MCF 10A (cell line): ENCODE measurements at regions of chr2 and their contacts with region 1.

Region 1: DNA sequence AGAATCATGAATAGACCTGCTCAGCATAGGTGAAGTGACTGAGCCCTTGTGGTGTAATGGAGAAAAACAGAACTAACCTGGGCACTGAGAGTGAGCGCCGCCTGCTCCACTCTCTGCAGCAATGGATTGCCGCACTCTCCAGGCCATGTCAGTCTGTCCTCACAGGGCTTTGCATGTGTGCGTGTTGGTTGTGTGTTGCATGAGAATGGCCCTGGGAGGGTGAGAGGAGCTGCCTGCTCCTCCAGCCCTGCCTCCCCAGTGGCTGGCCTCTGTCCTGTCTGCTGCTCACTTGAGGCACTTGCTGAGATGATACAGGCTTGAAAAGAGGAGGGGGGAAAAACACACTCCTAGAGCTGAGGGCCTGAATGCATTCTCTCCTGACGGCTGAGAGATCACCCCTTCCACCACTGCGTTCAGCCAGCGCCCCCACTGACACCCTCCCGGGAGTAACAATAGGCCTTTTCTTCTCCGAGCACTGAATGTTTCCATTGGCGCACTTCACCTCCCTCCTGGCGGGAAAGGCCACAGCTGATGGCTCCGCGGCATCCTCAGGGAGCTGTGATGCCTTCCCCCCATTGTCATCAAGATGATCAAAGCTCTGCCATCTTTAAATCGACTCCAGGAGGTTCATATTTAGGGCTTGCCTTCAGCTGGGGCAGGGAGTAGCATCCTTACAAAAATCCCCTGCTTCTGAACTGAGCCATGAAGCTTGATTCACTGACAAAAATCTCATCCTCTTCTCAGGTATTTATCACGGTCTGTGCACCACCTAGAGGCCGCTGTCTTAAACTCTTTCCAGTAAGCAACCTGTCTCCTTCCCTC is 49.9 kb upstream of the DAPL1 start:
- DNase-seq: peak; percentile 62
- H3K4me3 Mint-ChIP-seq: no peak overlapping the region
- H3K27ac Mint-ChIP-seq: no peak overlapping the region
- H3K4me1 Mint-ChIP-seq: peaks cover 6% of the 10 kb centered on the region
- H3K27me3 Mint-ChIP-seq: peaks cover 38% of the 10 kb centered on the region
- CTCF ChIP-seq: peak; percentile 61

Region 2: DNA sequence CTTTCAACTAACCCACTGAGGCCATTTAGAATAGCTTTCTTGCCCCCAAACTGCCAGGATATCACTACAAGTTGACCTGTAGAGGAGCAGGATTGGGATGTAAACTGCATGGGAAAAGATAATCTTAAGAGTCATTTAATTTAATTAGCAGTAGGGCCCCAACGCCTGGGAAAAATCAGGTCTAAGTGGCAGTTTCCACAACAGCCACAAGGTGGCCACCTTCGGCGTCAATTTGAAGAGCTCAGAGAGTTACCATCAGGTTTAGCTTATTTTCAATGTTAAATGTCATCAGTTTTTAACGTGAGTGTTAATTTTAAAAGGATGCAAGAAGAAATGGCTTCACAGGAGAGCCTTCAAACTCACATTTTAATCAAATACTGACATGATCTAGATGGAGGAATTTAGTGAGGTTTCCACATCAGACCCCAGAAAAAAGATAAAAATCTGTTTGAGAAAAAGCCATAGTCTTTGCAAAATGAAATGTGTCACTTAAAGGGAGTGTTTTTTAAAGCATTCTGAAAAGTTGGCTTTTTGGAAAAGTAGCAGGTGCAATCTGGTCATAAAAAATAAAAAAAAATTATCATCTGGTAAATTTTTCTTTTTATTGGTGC is 720.9 kb before region 1 on chr2:
- CTCF ChIA-PET with region 1: interaction called, 343 read pairs
- POLR2A ChIA-PET with region 1: interaction called, 5 read pairs
- intact Hi-C with region 1: loop called (anchors 2 kb)
- DNase-seq: peak; percentile 64
- H3K4me3 Mint-ChIP-seq: no peak overlapping the region
- H3K27ac Mint-ChIP-seq: no peak overlapping the region
- H3K4me1 Mint-ChIP-seq: no peaks in the 10 kb centered on the region
- H3K27me3 Mint-ChIP-seq: no peaks in the 10 kb centered on the region
- CTCF ChIP-seq: peak; percentile 73

Region 3: GRCh38 chr2:158045362-158045761 is 699.9 kb before region 1 on chr2:
- CTCF ChIA-PET with region 1: interaction called, 16 read pairs
- POLR2A ChIA-PET with region 1: no interaction called
- intact Hi-C with region 1: no loop called
- DNase-seq: peak; percentile 15
- H3K4me3 Mint-ChIP-seq: no peak overlapping the region
- H3K27ac Mint-ChIP-seq: no peak overlapping the region
- H3K4me1 Mint-ChIP-seq: no peaks in the 10 kb centered on the region
- H3K27me3 Mint-ChIP-seq: no peaks in the 10 kb centered on the region
- CTCF ChIP-seq: no peak

Region 4: DNA sequence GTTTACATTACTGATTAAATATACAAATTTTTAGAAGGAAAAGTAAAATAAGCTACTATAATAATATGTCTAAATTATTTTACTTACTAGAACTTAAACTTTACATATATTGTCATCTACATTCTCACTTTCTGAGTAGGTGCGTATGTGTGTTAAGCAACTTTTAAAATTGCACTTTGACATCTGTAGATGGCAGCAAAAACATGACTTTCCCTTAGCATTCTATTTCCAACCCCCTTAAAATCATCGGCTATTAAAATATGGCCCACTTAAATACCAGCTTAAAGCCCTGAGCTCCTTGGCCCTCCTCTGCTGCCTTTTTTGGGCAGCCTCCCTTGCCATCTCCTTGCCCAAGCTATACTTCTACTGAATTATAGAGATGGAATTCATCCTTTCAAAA is 565.6 kb before region 1 on chr2:
- CTCF ChIA-PET with region 1: interaction called, 49 read pairs
- POLR2A ChIA-PET with region 1: no interaction called
- intact Hi-C with region 1: loop called (anchors 1 kb)
- DNase-seq: peak; percentile 26
- H3K4me3 Mint-ChIP-seq: no peak overlapping the region
- H3K27ac Mint-ChIP-seq: no peak overlapping the region
- H3K4me1 Mint-ChIP-seq: no peaks in the 10 kb centered on the region
- H3K27me3 Mint-ChIP-seq: peaks cover 19% of the 10 kb centered on the region
- CTCF ChIP-seq: peak; percentile 37

Region 5: GRCh38 chr2:158619496-158619895 is 125.8 kb before region 1 on chr2:
- CTCF ChIA-PET with region 1: interaction called, 15 read pairs
- POLR2A ChIA-PET with region 1: no interaction called
- intact Hi-C with region 1: no loop called
- DNase-seq: peak; percentile 62
- H3K4me3 Mint-ChIP-seq: no peak overlapping the region
- H3K27ac Mint-ChIP-seq: peak overlapping the region; percentile 57
- H3K4me1 Mint-ChIP-seq: peaks cover 11% of the 10 kb centered on the region
- H3K27me3 Mint-ChIP-seq: no peaks in the 10 kb centered on the region
- CTCF ChIP-seq: no peak

Region 6: DNA sequence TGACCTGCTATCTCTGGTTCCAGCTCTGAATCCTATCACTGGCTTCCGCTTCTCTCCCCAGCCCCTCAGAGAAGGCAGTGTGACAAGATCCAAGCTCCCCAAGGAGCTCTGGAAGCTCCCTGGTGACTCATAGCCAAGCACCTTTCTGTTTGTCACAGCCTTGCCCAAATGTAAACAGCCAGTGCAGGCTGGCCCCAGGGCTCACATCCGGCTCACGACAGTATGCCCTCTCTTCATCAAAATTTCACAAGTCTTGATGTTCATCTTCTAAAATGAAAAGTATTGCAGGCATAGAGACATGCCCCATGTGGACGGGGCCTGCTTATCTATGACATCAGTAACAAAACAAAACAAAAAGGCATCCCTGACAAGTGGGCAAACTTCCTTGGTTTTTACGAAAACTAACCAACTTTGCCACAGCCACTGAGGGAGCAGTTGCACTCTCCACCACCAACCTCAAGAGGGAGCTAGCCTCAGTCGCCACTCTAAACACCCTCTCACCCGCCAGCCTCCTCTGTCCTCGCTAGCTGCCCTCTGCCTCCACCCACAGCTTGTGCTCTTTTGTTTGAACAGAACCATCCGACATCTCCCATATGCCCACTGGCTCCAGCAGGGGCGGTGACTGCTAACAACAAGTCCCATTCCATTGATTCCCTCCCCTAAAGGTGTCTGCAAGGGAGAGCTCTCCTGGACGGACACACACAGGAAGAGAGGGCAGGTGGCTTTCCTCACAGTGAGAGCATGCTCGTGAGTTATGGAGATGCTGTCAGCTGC is 21.2 kb before region 1 on chr2:
- CTCF ChIA-PET with region 1: interaction called, 29 read pairs
- POLR2A ChIA-PET with region 1: no interaction called
- intact Hi-C with region 1: no loop called
- DNase-seq: peak; percentile 25
- H3K4me3 Mint-ChIP-seq: no peak overlapping the region
- H3K27ac Mint-ChIP-seq: peak overlapping the region; percentile 32
- H3K4me1 Mint-ChIP-seq: peaks cover 16% of the 10 kb centered on the region
- H3K27me3 Mint-ChIP-seq: no peaks in the 10 kb centered on the region
- CTCF ChIP-seq: no peak

Region 7: DNA sequence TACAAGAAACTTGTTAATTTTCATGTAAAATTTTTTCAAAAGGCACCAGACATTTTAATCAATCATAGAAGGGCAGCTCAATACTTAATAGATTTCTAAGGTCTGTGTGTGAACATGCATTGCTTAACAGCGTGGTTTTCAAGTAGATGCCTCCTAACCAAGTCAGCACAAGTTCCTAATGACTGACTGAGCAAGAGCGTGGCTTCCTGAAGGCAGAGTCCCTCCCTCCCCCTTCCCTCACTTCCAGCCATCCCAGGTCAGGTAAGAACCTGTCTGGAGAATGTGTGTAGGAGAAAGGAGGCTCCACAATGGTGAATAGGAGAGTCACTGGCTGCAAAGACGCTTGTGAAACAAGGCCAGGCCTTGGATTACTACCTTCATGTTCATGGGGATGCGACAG is 16.4 kb after region 1 on chr2:
- CTCF ChIA-PET with region 1: interaction called, 94 read pairs
- POLR2A ChIA-PET with region 1: interaction called, 3 read pairs
- intact Hi-C with region 1: no loop called
- DNase-seq: peak; percentile 91
- H3K4me3 Mint-ChIP-seq: peak overlapping the region; percentile 54
- H3K27ac Mint-ChIP-seq: peak overlapping the region; percentile 81
- H3K4me1 Mint-ChIP-seq: peaks cover 7% of the 10 kb centered on the region
- H3K27me3 Mint-ChIP-seq: no peaks in the 10 kb centered on the region
- CTCF ChIP-seq: no peak

Region 8: GRCh38 chr2:158795195-158795924 is 50.1 kb after region 1 on chr2 and contains the start of gene DAPL1:
- CTCF ChIA-PET with region 1: no interaction called
- POLR2A ChIA-PET with region 1: no interaction called
- intact Hi-C with region 1: no loop called
- DNase-seq: peak; percentile 30
- H3K4me3 Mint-ChIP-seq: no peak within 1 kb of the TSS
- H3K27ac Mint-ChIP-seq: no peak within 1 kb of the TSS
- H3K4me1 Mint-ChIP-seq: peaks cover 6% of the 10 kb centered on the region
- H3K27me3 Mint-ChIP-seq: no peaks in the 10 kb centered on the region
- CTCF ChIP-seq: no peak
- total RNA-seq, gene DAPL1: not detected in 2 replicates